Motor neuron (in vitro differentiated cells): ENCODE measurements at regions of chr2 and their contacts with region 1.

Region 1: GRCh38 chr2:195318440-195319111 is 338.4 kb upstream of the SLC39A10 start:
- ATAC-seq: peak; percentile 12 to 60 (median 46)
- H3K4me3 ChIP-seq: no peak overlapping the region
- H3K27ac ChIP-seq: no peak overlapping the region
- H3K4me1 ChIP-seq: peaks cover 2 to 18% of the 10 kb centered on the region in 2 donors

Region 2: DNA sequence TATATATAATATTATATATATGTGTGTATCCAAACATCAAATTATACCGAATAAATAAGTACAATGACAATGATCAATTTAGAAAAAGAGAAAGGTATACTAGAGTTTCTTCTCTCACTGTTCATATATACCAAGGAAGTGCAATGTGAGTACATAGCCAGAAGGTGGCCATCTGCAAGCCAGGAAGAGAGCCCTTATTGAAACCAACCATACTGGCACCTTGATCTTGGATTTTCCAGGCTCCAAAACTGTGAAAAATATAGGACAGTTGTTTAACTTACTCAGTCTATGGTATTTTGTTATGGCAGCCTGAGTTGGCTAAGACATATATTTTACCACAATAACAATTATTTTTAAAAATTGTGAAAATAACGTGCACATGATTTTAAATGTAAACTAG is 1151.8 kb before region 1 on chr2:
- in situ Hi-C with region 1: loop called in 1 of 9 experiments (anchors 25 kb)
- ATAC-seq: peak in 4 of 8 experiments; percentile 38 to 58 (median 42)
- H3K4me3 ChIP-seq: no peak overlapping the region
- H3K27ac ChIP-seq: no peak overlapping the region
- H3K4me1 ChIP-seq: no peaks in the 10 kb centered on the region

Region 3: GRCh38 chr2:194455358-194455757 is 863.2 kb before region 1 on chr2:
- in situ Hi-C with region 1: no loop called
- ATAC-seq: no peak
- H3K4me3 ChIP-seq: no peak overlapping the region
- H3K27ac ChIP-seq: no peak overlapping the region
- H3K4me1 ChIP-seq: no peaks in the 10 kb centered on the region

Region 4: GRCh38 chr2:194566907-194567660 is 751.5 kb before region 1 on chr2:
- in situ Hi-C with region 1: loop called in 1 of 9 experiments (anchors 25 kb)
- ATAC-seq: no peak
- H3K4me3 ChIP-seq: no peak overlapping the region
- H3K27ac ChIP-seq: no peak overlapping the region
- H3K4me1 ChIP-seq: no peaks in the 10 kb centered on the region

Region 5: GRCh38 chr2:195049372-195050031 is 269.1 kb before region 1 on chr2:
- in situ Hi-C with region 1: no loop called
- ATAC-seq: no peak
- H3K4me3 ChIP-seq: no peak overlapping the region
- H3K27ac ChIP-seq: no peak overlapping the region
- H3K4me1 ChIP-seq: no peaks in the 10 kb centered on the region

Region 6: GRCh38 chr2:196131384-196131937 is 812.9 kb after region 1 on chr2:
- in situ Hi-C with region 1: no loop called
- ATAC-seq: peak in 2 of 8 experiments; percentile 79 to 84
- H3K4me3 ChIP-seq: no peak overlapping the region
- H3K27ac ChIP-seq: no peak overlapping the region
- H3K4me1 ChIP-seq: no peaks in the 10 kb centered on the region